A549 (cell line): ENCODE measurements at regions of chr16 and their contacts with region 1.

Region 1: DNA sequence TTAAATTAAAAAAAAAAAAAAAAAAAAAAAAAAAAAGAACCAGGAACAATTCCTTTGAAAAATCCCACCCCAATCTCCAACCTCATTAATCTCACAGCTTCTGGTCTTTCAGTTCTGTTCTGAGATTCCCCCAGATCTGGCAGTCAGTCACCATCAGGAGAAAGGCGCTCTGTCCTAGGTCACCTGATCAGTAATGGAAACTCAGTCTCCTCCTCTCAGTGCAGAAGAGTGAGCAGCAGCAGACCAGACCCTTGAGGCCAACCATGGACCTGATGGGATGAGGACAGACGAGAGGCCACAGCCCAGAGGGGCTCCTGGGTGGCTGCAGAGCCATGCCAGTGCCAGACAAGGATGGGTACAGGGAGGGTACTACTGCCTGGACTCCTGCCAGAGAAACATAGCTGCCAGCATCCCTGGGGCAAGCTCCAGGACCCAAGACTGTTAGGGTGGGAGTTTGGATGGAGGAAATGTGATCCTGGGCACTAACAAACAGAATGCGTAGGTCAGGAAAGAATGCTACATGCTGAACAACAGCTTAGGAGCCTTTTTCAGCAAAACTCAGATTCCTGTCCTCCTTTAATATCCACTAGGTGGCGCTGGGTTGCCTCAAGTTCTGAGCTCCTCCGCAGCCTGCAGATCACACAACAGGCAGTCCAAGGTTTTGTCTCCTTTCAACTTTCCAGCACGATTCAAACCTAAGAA is 28.7 kb downstream of the MPG start:
- DNase-seq: peak; percentile 71 to 86
- ATAC-seq: peak; percentile 84 to 93
- H3K4me3 ChIP-seq: no peak overlapping the region
- H3K27ac ChIP-seq: peak overlapping the region in 1 of 2 experiments; percentile 48; a peak in 2 of 6 replicates
- H3K4me1 ChIP-seq: peaks cover 5% of the 10 kb centered on the region; the same call in 2 of the 3 replicates
- CTCF ChIP-seq: peak; percentile 85
- EP300 ChIP-seq: no peak
- POLR2A ChIP-seq: no peak
- RAD21 ChIP-seq: peak; percentile 76 to 83

Region 2: GRCh38 chr16:77807-78443 is 28.8 kb before region 1 on chr16 and contains the start of gene MPG:
- CTCF ChIA-PET with region 1: interaction called, 11 read pairs
- POLR2A ChIA-PET with region 1: no interaction called
- DNase-seq: peak; percentile 77 to 98
- ATAC-seq: peak; percentile 54 to 76
- H3K4me3 ChIP-seq: peak within 1 kb of the TSS; percentile 94
- H3K27ac ChIP-seq: peak within 1 kb of the TSS; percentile 97 to 98
- H3K4me1 ChIP-seq: peaks cover 30% of the 10 kb centered on the region
- CTCF ChIP-seq: no peak
- EP300 ChIP-seq: no peak
- POLR2A ChIP-seq: peak; percentile 73
- RAD21 ChIP-seq: no peak
- polyA plus RNA-seq, gene MPG: 25.5 and 28.2 TPM in 2 replicates

Region 3: GRCh38 chr16:91484-91883 is 15.3 kb before region 1 on chr16:
- CTCF ChIA-PET with region 1: interaction called, 11 read pairs
- POLR2A ChIA-PET with region 1: interaction called, 4 read pairs
- DNase-seq: no peak
- ATAC-seq: no peak
- H3K4me3 ChIP-seq: no peak overlapping the region
- H3K27ac ChIP-seq: no peak overlapping the region
- H3K4me1 ChIP-seq: no peaks in the 10 kb centered on the region
- CTCF ChIP-seq: no peak
- EP300 ChIP-seq: no peak
- POLR2A ChIP-seq: no peak
- RAD21 ChIP-seq: no peak

Region 4: GRCh38 chr16:117379-118365 is 10.9 kb after region 1 on chr16:
- CTCF ChIA-PET with region 1: no interaction called
- POLR2A ChIA-PET with region 1: no interaction called
- DNase-seq: peak; percentile 70 to 74
- ATAC-seq: peak; percentile 81 to 92; a peak in 5 of 6 replicates
- H3K4me3 ChIP-seq: no peak overlapping the region
- H3K27ac ChIP-seq: peak overlapping the region in 1 of 2 experiments; percentile 13; a peak in 1 of 6 replicates
- H3K4me1 ChIP-seq: peaks cover 29% of the 10 kb centered on the region
- CTCF ChIP-seq: peak; percentile 65
- EP300 ChIP-seq: no peak
- POLR2A ChIP-seq: no peak
- RAD21 ChIP-seq: peak; percentile 57 to 58

Region 5: GRCh38 chr16:143456-143855 is 36.7 kb after region 1 on chr16:
- CTCF ChIA-PET with region 1: interaction called, 25 read pairs
- POLR2A ChIA-PET with region 1: interaction called, 7 read pairs
- DNase-seq: no peak
- ATAC-seq: no peak
- H3K4me3 ChIP-seq: no peak overlapping the region
- H3K27ac ChIP-seq: no peak overlapping the region
- H3K4me1 ChIP-seq: no peaks in the 10 kb centered on the region
- CTCF ChIP-seq: no peak
- EP300 ChIP-seq: no peak
- POLR2A ChIP-seq: no peak
- RAD21 ChIP-seq: no peak

Region 6: GRCh38 chr16:164827-165538 is 58.2 kb after region 1 on chr16:
- CTCF ChIA-PET with region 1: interaction called, 16 read pairs
- POLR2A ChIA-PET with region 1: no interaction called
- DNase-seq: no peak
- ATAC-seq: peak in 1 of 2 experiments; percentile 51; a peak in 3 of 6 replicates
- H3K4me3 ChIP-seq: peak overlapping the region; percentile 47
- H3K27ac ChIP-seq: 0 out of 6 replicates have a peak overlapping the region, but pooled peaks of 1 of the 2 experiments have one; percentile 1
- H3K4me1 ChIP-seq: peaks cover 13% of the 10 kb centered on the region
- CTCF ChIP-seq: no peak
- EP300 ChIP-seq: no peak
- POLR2A ChIP-seq: no peak
- RAD21 ChIP-seq: no peak

Region 7: DNA sequence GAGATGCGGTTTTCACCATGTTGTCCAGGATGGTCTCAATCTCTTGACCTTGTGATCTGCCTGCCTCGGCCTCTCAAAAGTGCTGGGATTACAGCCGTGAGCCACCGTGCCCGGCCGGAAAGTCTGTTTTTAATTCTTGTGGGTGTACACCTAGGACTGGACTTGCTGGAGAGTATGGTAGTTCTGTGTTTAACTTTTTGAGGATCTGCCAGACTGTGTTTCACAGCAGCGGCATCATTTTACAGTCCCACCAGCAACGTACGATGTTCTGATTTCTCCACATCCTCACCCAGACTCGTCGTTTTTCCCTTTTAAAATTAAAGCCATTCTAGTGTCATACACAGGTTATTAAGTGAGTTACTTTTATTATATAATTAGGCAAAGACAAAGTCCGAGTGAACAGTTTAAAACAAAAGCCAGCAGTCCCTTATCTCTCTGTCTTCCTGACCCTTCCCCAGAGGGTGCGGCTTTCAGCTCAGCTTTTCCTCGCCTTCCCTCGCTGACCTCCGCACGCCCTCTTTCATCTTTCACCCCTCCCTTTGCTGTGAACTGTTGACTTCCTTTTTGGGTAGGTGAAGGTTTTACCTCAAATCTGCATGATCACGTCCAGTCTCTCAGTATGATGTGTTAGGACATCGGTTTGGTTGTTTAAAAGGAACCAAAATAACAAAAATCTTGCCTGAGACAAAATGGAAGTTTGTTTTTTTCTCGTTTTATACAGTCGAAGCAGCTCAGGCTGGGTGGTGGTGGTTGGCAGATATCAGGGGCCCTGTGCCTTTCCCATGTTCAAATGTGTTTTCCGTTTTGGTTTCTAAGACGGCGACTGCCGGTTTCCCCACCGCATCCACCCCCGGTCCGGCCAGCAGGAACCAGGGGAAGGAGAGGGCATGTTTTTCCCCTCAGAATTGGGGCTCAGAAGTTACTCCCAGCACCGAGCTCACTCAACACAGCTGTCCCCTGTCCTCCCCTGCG is 145.9 kb after region 1 on chr16:
- CTCF ChIA-PET with region 1: no interaction called
- POLR2A ChIA-PET with region 1: no interaction called
- DNase-seq: no peak
- ATAC-seq: no peak
- H3K4me3 ChIP-seq: no peak overlapping the region
- H3K27ac ChIP-seq: no peak overlapping the region
- H3K4me1 ChIP-seq: peaks cover 8% of the 10 kb centered on the region; the same call in 2 of the 3 replicates
- CTCF ChIP-seq: no peak
- EP300 ChIP-seq: no peak
- POLR2A ChIP-seq: no peak
- RAD21 ChIP-seq: no peak

Region 8: GRCh38 chr16:554640-555365 is 448.0 kb after region 1 on chr16:
- CTCF ChIA-PET with region 1: no interaction called
- POLR2A ChIA-PET with region 1: no interaction called
- DNase-seq: no peak
- ATAC-seq: no peak
- H3K4me3 ChIP-seq: no peak overlapping the region
- H3K27ac ChIP-seq: no peak overlapping the region
- H3K4me1 ChIP-seq: peaks cover 1% of the 10 kb centered on the region; the same call in 2 of the 3 replicates
- CTCF ChIP-seq: no peak
- EP300 ChIP-seq: no peak
- POLR2A ChIP-seq: no peak
- RAD21 ChIP-seq: no peak